Left cardiac atrium (tissue), 4 donors: ENCODE measurements at regions of chr1 and their contacts with region 1.

Region 1: DNA sequence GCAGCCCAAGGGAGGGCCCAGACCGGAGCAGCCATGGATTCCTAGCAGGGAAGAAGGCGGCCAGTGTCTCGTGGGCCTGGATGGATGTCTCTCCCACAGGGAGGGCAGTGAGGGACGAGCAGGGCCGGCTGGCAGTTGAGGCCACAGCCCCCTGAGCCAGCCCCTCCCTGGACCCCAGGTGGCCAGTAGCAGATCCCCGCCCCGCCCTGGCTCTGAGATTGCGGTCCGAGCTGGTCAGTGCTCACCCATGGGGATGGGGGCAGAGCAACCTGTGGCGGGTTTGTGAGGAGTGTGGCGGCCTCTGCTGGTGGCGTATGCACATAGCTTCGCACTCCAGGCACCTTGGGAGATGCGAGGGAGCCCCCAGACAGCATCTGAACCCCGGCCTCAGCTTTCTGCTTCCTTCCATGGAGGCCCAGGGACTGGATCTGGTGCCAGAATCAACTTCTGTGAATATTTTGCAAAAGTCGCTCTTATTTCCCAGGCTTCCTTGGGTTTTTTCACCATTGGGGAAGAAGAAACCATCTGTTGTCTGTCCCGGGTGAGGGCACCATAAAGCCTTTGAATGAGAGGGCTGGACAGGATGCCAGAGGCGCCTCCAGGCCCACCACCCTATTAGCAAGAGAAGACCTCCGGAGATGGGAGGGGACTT is 8.4 kb upstream of the KCNN3 start:
- DNase-seq: peak; percentile 84
- ATAC-seq: peak; percentile 92 to 93

Region 2: DNA sequence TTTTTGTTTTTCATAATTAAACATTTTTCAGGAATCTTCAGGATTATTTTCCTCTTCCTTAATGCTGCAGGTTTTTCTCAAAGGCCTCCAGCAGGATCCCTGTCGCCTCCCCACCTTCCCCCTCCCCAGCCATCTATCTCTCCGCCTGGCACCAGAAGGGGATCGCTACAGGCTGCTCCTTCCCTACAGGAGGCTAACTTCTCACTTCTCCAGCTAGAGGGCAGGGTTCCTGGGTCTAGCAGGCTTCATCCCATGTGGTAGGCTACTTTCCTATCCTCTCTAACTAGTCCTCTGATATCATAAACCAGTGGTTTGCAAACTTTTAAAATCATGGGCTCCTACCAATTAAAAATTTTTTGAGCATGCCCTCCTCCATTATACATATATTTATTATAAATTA is 112.5 kb before region 1 on chr1:
- intact Hi-C with region 1: loop called in 1 of 2 experiments (anchors 5 kb)
- DNase-seq: no peak
- ATAC-seq: no peak

Region 3: DNA sequence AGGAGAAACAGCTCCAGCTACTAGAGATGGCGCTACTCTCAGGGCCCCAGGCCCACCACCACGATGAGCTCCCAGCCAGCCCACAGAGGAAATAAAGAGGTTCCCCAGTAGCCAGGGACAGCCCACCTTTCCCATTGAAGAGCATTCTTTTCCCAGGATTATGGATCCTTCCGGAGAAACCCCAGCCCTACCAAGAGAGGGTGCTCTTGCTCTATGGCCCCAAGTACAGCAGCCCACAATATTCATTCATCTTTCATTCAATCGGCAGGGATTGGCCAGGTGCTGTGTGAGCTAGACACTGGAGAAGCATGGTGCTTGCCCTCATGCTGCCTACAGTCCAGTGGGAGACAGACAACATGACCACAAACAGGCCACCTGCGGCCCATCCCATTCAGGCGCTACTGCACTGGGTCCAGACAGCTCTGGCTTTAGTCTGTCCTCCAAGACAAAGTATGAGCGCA is 28.2 kb after region 1 on chr1:
- intact Hi-C with region 1: no loop called
- DNase-seq: no peak
- ATAC-seq: peak in 1 of 2 donors; percentile 61